PC-3 (cell line): ENCODE measurements at regions of chr2 and their contacts with region 1.

Region 1: DNA sequence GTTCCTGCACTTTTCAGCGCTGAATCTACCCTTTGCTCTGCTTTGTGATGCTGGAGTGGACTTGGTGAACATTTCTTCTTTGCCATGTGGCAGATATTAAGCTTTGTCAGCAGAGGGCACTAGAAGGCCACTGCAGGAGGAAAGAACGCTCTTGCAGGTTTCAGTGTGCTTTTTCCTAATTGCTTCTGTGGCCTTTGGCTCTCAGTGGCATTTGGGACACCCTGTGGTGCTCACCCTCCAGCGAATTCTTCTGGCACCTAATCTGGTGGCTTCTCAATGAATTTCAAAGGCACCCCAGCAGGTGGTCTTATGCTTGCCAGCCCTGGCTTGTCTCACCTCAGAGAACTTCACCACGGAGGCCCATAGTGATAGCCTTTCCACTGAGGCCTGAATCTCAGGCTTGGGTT is 146.7 kb downstream of the MYO3B start:
- DNase-seq: peak; percentile 66
- ATAC-seq: peak; percentile 63
- H3K4me3 ChIP-seq: no peak overlapping the region
- H3K27ac ChIP-seq: no peak overlapping the region
- H3K4me1 ChIP-seq: no peaks in the 10 kb centered on the region
- H3K27me3 ChIP-seq: no peaks in the 10 kb centered on the region
- CTCF ChIP-seq: peak; percentile 88

Region 2: GRCh38 chr2:168536925-168537466 is 1787.6 kb before region 1 on chr2:
- CTCF ChIA-PET with region 1: no interaction called
- POLR2A ChIA-PET with region 1: no interaction called
- intact Hi-C with region 1: no loop called
- DNase-seq: peak; percentile 14
- ATAC-seq: peak; percentile 67
- H3K4me3 ChIP-seq: no peak overlapping the region
- H3K27ac ChIP-seq: no peak overlapping the region
- H3K4me1 ChIP-seq: peaks cover 11% of the 10 kb centered on the region; the same call in 1 of the 2 replicates
- H3K27me3 ChIP-seq: no peaks in the 10 kb centered on the region
- CTCF ChIP-seq: no peak

Region 3: DNA sequence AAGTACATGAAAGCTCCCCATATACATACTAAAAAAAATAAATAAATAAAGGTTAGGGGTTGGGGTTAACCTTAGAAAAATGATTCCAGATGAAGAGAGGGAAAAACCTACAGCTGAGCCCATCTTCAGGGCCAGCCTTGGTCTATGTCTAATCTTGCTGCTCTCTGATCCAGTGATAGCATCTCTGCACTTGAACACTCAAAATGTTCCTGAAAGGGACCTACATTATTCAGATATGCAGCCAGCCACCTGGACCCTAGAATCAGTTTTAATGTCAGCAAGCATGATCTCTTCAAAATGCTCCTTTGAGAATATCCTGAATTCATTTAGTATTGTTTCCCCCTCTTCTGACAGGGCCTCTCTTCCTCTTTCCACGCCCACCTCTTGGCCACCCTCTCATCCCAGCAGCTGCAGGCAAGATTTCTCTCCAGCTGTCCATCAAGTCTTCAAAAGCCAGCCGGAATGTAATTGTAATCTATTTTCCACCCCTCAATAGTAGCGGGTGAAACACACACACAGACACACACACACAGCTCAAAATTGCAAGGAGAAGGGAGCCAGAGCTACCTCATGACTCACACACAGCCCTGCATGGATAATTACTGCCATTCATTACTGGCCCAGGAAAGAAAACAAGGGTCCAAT is 11.2 kb before region 1 on chr2:
- CTCF ChIA-PET with region 1: no interaction called
- POLR2A ChIA-PET with region 1: no interaction called
- intact Hi-C with region 1: no loop called
- DNase-seq: no peak
- ATAC-seq: peak; percentile 63
- H3K4me3 ChIP-seq: no peak overlapping the region; the same call in 1 of the 2 replicates
- H3K27ac ChIP-seq: peak overlapping the region; percentile 54
- H3K4me1 ChIP-seq: peaks cover 51% of the 10 kb centered on the region
- H3K27me3 ChIP-seq: no peaks in the 10 kb centered on the region
- CTCF ChIP-seq: no peak

Region 4: GRCh38 chr2:170361090-170361936 is 36.7 kb after region 1 on chr2:
- CTCF ChIA-PET with region 1: interaction called, 10 read pairs
- POLR2A ChIA-PET with region 1: no interaction called
- intact Hi-C with region 1: loop called (anchors 2 kb)
- DNase-seq: peak; percentile 78
- ATAC-seq: peak; percentile 77
- H3K4me3 ChIP-seq: no peak overlapping the region
- H3K27ac ChIP-seq: no peak overlapping the region
- H3K4me1 ChIP-seq: peaks cover 15% of the 10 kb centered on the region
- H3K27me3 ChIP-seq: no peaks in the 10 kb centered on the region
- CTCF ChIP-seq: peak; percentile 90

Region 5: DNA sequence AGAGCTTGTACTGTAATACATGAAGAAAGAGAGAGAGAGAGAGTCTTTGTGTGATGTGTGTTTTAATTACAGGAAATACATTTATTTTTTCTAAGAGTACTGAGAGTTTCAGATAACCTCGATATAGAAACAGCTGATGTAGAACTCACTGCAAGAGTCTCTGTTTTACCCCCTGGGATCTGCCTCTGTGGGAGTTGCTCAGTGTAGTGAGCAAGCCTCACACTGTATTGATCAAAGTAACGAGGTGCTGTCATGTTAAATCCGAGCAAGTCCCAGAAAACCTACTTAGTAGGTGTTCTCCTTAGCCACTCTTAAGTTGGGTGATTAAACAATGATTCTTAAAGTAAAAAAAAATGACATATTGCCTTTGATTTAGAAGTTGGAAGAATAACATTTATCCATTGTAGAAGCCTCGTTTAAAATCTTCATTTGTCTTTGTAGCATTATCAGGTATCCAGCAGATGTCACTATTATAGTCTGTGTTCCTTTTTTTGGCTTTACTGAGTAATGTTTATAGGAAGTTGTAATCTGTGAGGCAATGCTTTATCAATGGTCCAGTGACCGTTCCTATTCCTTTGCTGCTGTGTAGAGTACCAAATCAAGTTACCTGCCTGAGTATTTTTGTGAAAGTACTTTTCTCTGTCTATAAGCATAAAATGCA is 72.3 kb after region 1 on chr2:
- CTCF ChIA-PET with region 1: interaction called, 3 read pairs
- POLR2A ChIA-PET with region 1: no interaction called
- intact Hi-C with region 1: loop called (anchors 2 kb)
- DNase-seq: peak; percentile 63
- ATAC-seq: peak; percentile 68
- H3K4me3 ChIP-seq: no peak overlapping the region
- H3K27ac ChIP-seq: no peak overlapping the region
- H3K4me1 ChIP-seq: peaks cover 11% of the 10 kb centered on the region
- H3K27me3 ChIP-seq: no peaks in the 10 kb centered on the region
- CTCF ChIP-seq: peak; percentile 80

Region 6: GRCh38 chr2:170707821-170708795 is 383.5 kb after region 1 on chr2:
- CTCF ChIA-PET with region 1: no interaction called
- POLR2A ChIA-PET with region 1: no interaction called
- intact Hi-C with region 1: no loop called
- DNase-seq: no peak
- ATAC-seq: no peak
- H3K4me3 ChIP-seq: no peak overlapping the region
- H3K27ac ChIP-seq: no peak overlapping the region
- H3K4me1 ChIP-seq: no peaks in the 10 kb centered on the region
- H3K27me3 ChIP-seq: no peaks in the 10 kb centered on the region
- CTCF ChIP-seq: no peak